Right ventricle myocardium inferior (tissue), 1 donor: ENCODE measurements at regions of chr2 and their contacts with region 1.

Region 1: DNA sequence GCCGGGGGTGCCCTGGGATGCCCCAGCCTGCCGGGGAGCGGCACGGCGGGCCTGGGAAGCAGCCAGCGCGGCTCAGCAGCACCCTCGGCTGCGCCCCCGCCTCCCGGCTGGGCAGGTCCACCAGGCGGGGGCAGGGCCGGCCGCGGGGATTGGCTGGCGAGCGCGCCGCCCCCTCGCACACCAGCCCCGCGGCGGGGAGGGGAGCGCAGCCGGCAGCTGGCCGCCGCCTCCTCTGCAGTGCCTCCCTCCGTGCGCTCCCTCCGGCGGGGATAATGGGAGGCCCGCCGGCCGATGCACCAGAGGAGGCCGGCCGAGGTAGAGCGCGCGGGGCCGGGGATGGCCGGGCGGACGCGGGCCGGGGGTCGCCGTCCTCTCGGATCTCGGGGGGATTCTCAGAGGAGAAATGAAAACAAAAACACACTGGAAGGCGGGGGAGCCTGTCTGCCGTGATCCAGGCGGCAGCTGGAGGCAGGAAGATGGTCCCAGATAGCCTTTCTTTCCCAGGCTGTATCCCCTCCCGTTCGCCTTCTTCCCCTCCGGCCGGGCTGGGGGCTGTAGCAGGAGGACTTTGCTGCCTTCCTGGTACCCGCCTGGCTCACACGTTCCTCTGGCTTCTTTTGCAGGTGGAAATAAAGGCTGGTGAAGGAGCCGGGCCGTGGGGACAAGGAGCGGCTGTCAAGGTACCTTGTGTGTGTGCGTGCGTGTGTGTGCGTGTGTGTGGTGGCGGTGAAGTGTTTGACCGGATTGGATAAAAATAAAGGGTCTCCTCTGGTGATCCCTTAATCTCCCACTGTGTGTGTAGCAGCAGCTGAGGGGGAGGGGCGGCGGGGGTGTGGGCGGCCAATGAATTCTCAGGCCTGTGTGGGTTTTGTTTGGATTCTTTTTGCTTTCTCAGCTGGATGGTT is 18.0 kb downstream of the TET3 start:
- DNase-seq: peak; percentile 93
- ATAC-seq: peak; percentile 99

Region 2: GRCh38 chr2:73970850-73971471 is 31.8 kb before region 1 on chr2:
- intact Hi-C with region 1: loop called (anchors 2 kb)
- DNase-seq: peak; percentile 88
- ATAC-seq: peak; percentile 84

Region 3: DNA sequence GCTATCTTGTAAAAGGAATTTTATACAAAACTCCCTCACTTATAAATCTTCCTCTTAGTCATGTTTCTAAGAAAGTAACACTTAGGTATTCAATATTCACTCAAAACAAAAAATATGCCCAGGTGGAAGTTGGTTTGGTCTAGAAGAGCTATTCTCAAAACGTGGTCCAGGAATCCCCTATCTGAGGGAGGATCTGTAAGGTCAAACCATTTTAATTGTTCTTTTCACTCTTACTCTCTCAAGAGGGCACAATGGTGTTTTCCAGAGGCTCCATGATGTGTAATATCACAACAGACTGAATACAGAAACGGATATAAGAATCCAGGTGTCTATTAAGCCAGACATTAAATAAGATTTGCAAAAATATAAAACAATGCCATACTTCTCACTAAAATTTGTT is 166.0 kb after region 1 on chr2:
- intact Hi-C with region 1: no loop called
- DNase-seq: no peak
- ATAC-seq: no peak